A673 (cell line): ENCODE measurements at regions of chr14 and their contacts with region 1.

Region 1: GRCh38 chr14:73458151-73458976 is at the start of gene NUMB:
- DNase-seq: peak; percentile 100
- H3K4me3 ChIP-seq: peak within 1 kb of the TSS; percentile 87
- H3K27ac ChIP-seq: peak within 1 kb of the TSS; percentile 84
- H3K4me1 ChIP-seq: peaks cover 62% of the 10 kb centered on the region
- H3K27me3 ChIP-seq: no peaks in the 10 kb centered on the region
- CTCF ChIP-seq: no peak
- total RNA-seq, gene NUMB: 46.3 and 59.8 TPM in 2 replicates

Region 2: GRCh38 chr14:73311708-73312030 is 146.7 kb before region 1 on chr14:
- CTCF ChIA-PET with region 1: no interaction called
- POLR2A ChIA-PET with region 1: interaction called, 24 read pairs
- intact Hi-C with region 1: no loop called
- DNase-seq: no peak
- H3K4me3 ChIP-seq: no peak overlapping the region
- H3K27ac ChIP-seq: no peak overlapping the region
- H3K4me1 ChIP-seq: peaks cover 7% of the 10 kb centered on the region
- H3K27me3 ChIP-seq: no peaks in the 10 kb centered on the region
- CTCF ChIP-seq: no peak